Dorsolateral prefrontal cortex (tissue), 120 donors: ENCODE measurements at regions of chr7 and their contacts with region 1.

Region 1: GRCh38 chr7:131071786-131072504 is 255.7 kb upstream of the MKLN1 start:
- DNase-seq: peak in 2 of 10 donors; percentile 49 to 67
- H3K4me3 ChIP-seq: peak overlapping the region in 47 of 59 donors; percentile 2 to 52 (median 29)
- H3K27ac ChIP-seq: peak overlapping the region; percentile 21 to 92 (median 75)
- H3K27me3 ChIP-seq: no peaks in the 10 kb centered on the region
- CTCF ChIP-seq: peak in 55 of 56 donors; percentile 28 to 67 (median 51)

Region 2: DNA sequence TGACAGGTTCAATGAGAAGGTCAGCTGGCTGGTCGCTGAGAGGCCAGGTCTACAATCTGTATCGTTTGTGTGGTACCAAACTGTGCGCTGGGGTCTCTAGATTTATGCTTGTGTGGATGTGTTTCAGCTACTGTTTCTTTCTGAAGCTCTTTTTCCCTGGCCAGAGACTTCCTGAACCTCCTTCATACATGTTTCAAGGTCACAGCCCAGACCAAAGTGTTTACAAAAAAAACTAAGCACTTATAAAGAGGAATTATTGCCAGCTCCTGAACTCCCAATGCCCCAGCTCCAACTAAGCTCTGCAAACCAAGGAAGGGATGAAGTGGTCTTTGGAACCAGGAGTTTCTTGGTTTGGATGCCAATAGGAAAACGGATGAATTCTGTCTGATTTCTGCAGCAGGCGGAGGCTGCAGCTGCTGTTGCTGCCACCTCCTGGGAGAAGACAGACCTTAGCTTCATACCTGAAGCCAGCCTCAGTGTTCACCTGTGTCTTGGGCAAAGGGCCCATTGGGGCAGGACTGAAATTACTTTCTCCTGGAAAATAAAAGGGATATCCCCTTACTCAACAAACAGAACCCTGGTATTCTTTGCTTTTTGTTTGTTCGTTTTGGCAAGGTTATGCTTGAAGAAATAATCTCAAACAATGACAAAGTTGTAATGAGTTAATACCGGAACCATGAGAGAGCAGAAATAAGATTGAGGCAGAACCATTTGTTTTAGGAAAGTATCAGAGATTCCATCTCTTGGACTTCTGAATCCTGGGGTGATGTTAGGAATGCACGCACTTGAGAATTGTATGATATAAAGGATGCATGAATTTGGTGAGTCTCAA is 231.1 kb after region 1 on chr7:
- intact Hi-C with region 1: loop called in 1 of 2 experiments (anchors 10 kb)
- DNase-seq: peak in 8 of 10 donors; percentile 16 to 59 (median 46)
- H3K4me3 ChIP-seq: no peak overlapping the region
- H3K27ac ChIP-seq: peak overlapping the region in 47 of 59 donors; percentile 2 to 78 (median 40)
- H3K27me3 ChIP-seq: no peaks in the 10 kb centered on the region
- CTCF ChIP-seq: peak in 55 of 56 donors; percentile 37 to 73 (median 60)

Region 3: GRCh38 chr7:131424219-131424822 is 352.4 kb after region 1 on chr7:
- intact Hi-C with region 1: loop called in 1 of 2 experiments (anchors 10 kb)
- DNase-seq: no peak
- H3K4me3 ChIP-seq: no peak overlapping the region
- H3K27ac ChIP-seq: peak overlapping the region in 57 of 59 donors; percentile 13 to 94 (median 85)
- H3K27me3 ChIP-seq: no peaks in the 10 kb centered on the region
- CTCF ChIP-seq: peak; percentile 59 to 90 (median 79)

Region 4: DNA sequence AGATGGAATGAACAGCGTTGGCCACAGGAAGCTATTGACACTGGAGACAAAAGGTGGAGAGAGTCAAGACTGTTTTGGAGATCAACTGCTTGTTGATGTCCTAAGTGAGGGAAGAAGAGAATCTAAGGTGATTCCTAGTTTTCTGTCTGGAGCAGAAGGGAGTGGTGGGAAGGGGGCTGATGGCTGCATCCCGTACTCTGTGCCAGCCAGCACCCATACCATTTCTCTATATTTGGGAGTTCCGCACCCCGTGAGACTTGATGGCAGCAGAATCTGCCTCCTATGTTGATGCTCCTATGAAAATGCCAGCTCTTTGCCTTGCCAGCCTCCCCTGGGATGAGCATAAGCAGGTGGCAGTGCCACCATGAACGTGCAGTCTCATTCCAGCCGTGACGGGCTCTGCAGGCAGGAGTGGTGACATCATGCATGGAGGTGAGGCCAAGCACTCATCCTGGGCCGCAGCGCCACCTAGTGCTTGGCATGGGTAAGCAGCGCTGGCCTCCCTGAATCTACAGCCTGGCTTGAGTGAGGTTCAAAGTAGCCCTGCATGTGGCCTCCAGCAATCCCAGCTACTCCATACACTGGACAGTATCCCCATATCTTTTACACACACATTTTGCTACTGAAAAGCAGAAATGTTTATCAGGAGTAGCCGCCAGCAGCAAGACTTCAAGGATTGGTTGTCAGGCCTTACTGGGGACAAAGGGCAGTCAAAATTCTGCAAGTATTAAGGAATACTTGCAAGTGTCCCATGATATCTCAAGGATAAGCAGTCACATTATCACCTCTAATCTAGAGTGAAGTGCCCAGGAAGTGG is 441.5 kb after region 1 on chr7:
- intact Hi-C with region 1: loop called in 1 of 2 experiments (anchors 5 kb)
- DNase-seq: peak; percentile 74 to 88 (median 84)
- H3K4me3 ChIP-seq: peak overlapping the region in 15 of 59 donors; percentile 4 to 47 (median 25)
- H3K27ac ChIP-seq: peak overlapping the region in 43 of 59 donors; percentile 3 to 81 (median 48)
- H3K27me3 ChIP-seq: no peaks in the 10 kb centered on the region
- CTCF ChIP-seq: peak; percentile 63 to 98 (median 94)